ENCODE measurements at regions of chr14 and their contacts with region 1.

Region 1: GRCh38 chr14:68248481-68249255 is 429.1 kb downstream of the RAD51B start:
- DNase-seq: peak in 4 of 5 donors; percentile 29 to 60 (median 54)
- H3K4me3 ChIP-seq: no peak overlapping the region
- H3K27ac ChIP-seq: peak overlapping the region; percentile 27 to 86
- H3K4me1 ChIP-seq: peaks cover 36% of the 10 kb centered on the region
- H3K27me3 ChIP-seq: no peaks in the 10 kb centered on the region
- CTCF ChIP-seq: peak in 2 of 3 donors; percentile 68 to 76
- EP300 ChIP-seq: no peak
- POLR2A ChIP-seq: no peak

Region 2: DNA sequence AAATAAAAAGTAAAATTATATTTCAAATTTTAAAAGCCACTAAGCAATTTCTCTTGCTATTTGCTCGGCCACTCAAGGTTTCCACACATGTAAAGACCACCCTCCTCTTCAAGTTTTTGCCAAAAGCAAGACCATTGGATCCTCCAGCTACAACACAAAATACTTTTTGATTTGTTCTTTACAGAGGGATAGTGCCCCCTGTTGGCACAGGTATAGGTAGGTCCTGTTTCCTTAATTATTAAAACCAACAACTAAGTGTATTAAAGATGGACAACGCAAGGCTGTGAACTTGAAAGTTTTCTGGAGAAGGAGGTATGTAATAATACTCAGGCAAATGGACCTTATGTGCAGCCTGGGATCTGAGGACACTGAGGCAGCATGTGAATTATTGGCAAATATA is 912.9 kb before region 1 on chr14:
- intact Hi-C with region 1: no loop called
- DNase-seq: no peak
- H3K4me3 ChIP-seq: no peak overlapping the region
- H3K27ac ChIP-seq: no peak overlapping the region
- H3K4me1 ChIP-seq: no peaks in the 10 kb centered on the region
- H3K27me3 ChIP-seq: no peaks in the 10 kb centered on the region
- CTCF ChIP-seq: no peak
- EP300 ChIP-seq: no peak
- POLR2A ChIP-seq: no peak

Region 3: GRCh38 chr14:67793863-67794262 is 454.8 kb before region 1 on chr14:
- intact Hi-C with region 1: no loop called
- DNase-seq: no peak
- H3K4me3 ChIP-seq: no peak overlapping the region
- H3K27ac ChIP-seq: no peak overlapping the region
- H3K4me1 ChIP-seq: no peaks in the 10 kb centered on the region
- H3K27me3 ChIP-seq: no peaks in the 10 kb centered on the region
- CTCF ChIP-seq: no peak
- EP300 ChIP-seq: no peak
- POLR2A ChIP-seq: no peak

Region 4: DNA sequence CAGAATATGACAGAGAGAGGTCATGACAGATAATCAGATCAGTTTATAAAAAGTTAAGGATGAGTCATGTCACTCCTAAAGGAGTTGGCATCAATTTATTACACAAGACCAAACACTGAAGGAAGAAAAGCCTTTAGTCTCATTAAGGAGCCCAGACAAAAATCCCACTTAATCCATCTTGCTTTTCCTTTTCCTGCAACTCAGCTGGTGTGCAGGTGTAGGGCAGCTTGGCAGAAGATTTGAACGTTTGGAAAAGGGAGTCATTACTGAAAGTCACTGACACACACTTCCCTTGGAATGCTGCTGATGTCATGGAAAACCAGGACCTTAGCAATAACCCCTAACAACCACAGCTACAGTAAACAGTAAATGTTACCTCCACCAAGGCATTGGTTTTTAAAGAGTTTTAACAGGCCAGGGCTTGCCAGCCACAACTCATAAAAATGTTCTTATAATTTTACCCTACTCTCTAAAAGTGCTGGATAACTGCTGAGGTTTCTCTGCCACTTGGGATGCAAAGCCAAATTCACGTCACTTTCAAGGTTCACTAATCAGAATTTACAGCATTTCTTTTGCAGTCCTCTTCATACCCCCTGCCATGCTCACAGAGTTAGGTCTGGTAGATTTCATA is 108.4 kb before region 1 on chr14:
- intact Hi-C with region 1: loop called in 1 of 4 experiments (anchors 10 kb)
- DNase-seq: peak in 4 of 5 donors; percentile 39 to 84 (median 67)
- H3K4me3 ChIP-seq: no peak overlapping the region
- H3K27ac ChIP-seq: peak overlapping the region in 1 of 2 donors; percentile 81
- H3K4me1 ChIP-seq: peaks cover 25% of the 10 kb centered on the region
- H3K27me3 ChIP-seq: no peaks in the 10 kb centered on the region
- CTCF ChIP-seq: no peak
- EP300 ChIP-seq: peak; percentile 82
- POLR2A ChIP-seq: no peak

Region 5: GRCh38 chr14:68548194-68549056 is 299.8 kb after region 1 on chr14:
- intact Hi-C with region 1: loop called in 1 of 4 experiments (anchors 5 kb)
- DNase-seq: peak; percentile 89 to 96 (median 93)
- H3K4me3 ChIP-seq: no peak overlapping the region
- H3K27ac ChIP-seq: peak overlapping the region; percentile 78 to 92
- H3K4me1 ChIP-seq: peaks cover 40% of the 10 kb centered on the region
- H3K27me3 ChIP-seq: no peaks in the 10 kb centered on the region
- CTCF ChIP-seq: no peak
- EP300 ChIP-seq: peak; percentile 85
- POLR2A ChIP-seq: peak; percentile 49

Region 6: GRCh38 chr14:68788996-68789820 is 540.5 kb after region 1 on chr14:
- intact Hi-C with region 1: loop called in 3 of 4 experiments (anchors 2 to 10 kb)
- DNase-seq: peak; percentile 65 to 88 (median 82)
- H3K4me3 ChIP-seq: peak overlapping the region; percentile 85
- H3K27ac ChIP-seq: peak overlapping the region; percentile 88 to 100
- H3K4me1 ChIP-seq: peaks cover 8% of the 10 kb centered on the region
- H3K27me3 ChIP-seq: no peaks in the 10 kb centered on the region
- CTCF ChIP-seq: peak; percentile 16 to 57 (median 54)
- EP300 ChIP-seq: no peak
- POLR2A ChIP-seq: no peak

Region 7: GRCh38 chr14:68816262-68816942 is 567.7 kb after region 1 on chr14:
- intact Hi-C with region 1: loop called in 3 of 4 experiments (anchors 2 to 10 kb)
- DNase-seq: peak; percentile 92 to 96 (median 95)
- H3K4me3 ChIP-seq: peak overlapping the region; percentile 45
- H3K27ac ChIP-seq: peak overlapping the region; percentile 75 to 99
- H3K4me1 ChIP-seq: peaks cover 28% of the 10 kb centered on the region
- H3K27me3 ChIP-seq: no peaks in the 10 kb centered on the region
- CTCF ChIP-seq: peak; percentile 96 to 100 (median 98)
- EP300 ChIP-seq: no peak
- POLR2A ChIP-seq: peak; percentile 63

Measured in ovary (tissue), 10 donors.